ENCODE measurements at regions of chr14 and their contacts with region 1.

Region 1: DNA sequence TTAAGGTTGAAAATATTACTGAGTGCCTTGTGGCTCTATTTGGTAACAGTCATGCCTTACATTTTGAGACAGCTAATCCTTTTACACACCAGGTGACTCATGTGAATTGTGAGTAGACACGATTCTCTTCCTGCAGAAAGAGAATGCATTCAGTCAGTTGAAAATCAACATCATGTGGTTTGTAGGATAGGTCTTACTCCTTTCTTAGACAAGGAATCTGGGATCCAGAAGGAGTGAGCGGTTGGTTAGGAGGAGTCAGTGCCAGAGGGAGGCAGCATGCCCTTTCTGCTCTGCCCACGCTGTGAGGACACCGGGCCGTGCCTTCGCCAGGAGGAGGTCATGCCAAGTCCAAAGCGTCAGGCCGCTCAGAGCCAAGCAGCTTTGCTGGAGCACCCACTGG is 47.6 kb downstream of the TRAF3 start:
- DNase-seq: peak; percentile 86
- ATAC-seq: peak; percentile 13; the same call in 1 of the 2 replicates
- H3K4me3 ChIP-seq: no peak overlapping the region
- H3K27ac ChIP-seq: no peak overlapping the region
- H3K4me1 ChIP-seq: peaks cover 18% of the 10 kb centered on the region
- H3K27me3 ChIP-seq: no peaks in the 10 kb centered on the region
- CTCF ChIP-seq: no peak
- POLR2A ChIP-seq: no peak
- RAD21 ChIP-seq: no peak

Region 2: DNA sequence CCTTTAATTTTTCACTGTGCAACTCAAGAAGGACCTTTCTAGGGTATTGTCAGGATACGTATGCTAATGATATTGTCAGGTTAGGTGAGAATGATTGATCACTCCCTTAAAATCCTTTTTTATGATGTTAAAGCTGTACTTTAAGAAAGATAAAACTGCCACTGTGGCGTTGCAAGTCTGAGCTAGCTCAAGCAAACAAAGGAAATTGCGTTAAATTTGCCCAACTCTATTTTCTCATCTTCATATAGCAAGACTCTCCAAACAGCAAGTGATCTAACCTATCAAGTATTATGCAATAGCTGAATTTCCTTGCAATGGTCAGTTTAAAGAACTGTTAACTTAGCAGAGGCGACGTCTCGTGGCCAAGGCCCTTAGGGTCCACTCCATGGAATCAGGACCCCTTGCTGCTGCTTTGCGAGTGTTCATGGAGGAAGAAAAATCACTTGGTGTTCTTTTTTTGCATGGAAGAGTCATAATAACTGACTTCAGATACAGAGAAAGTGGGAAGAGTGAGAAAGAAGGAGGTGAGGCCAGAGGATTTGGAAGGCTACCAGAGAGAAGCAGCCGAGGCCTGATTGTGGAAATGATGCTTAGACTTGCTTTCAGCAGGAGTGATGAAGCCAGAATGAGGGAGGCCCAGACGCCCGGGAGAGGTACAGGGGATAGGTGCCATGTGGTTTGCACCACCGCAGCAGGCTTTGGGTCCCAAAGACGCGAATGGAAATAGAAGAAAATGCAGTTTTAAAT is 45.1 kb before region 1 on chr14:
- CTCF ChIA-PET with region 1: no interaction called
- POLR2A ChIA-PET with region 1: no interaction called
- dilution Hi-C with region 1: no loop called
- in situ Hi-C with region 1: no loop called
- intact Hi-C with region 1: loop called (anchors 5 kb)
- DNase-seq: peak; percentile 33
- ATAC-seq: no peak
- H3K4me3 ChIP-seq: no peak overlapping the region
- H3K27ac ChIP-seq: no peak overlapping the region
- H3K4me1 ChIP-seq: peaks cover 20% of the 10 kb centered on the region
- H3K27me3 ChIP-seq: no peaks in the 10 kb centered on the region
- CTCF ChIP-seq: no peak
- POLR2A ChIP-seq: no peak
- RAD21 ChIP-seq: no peak

Region 3: DNA sequence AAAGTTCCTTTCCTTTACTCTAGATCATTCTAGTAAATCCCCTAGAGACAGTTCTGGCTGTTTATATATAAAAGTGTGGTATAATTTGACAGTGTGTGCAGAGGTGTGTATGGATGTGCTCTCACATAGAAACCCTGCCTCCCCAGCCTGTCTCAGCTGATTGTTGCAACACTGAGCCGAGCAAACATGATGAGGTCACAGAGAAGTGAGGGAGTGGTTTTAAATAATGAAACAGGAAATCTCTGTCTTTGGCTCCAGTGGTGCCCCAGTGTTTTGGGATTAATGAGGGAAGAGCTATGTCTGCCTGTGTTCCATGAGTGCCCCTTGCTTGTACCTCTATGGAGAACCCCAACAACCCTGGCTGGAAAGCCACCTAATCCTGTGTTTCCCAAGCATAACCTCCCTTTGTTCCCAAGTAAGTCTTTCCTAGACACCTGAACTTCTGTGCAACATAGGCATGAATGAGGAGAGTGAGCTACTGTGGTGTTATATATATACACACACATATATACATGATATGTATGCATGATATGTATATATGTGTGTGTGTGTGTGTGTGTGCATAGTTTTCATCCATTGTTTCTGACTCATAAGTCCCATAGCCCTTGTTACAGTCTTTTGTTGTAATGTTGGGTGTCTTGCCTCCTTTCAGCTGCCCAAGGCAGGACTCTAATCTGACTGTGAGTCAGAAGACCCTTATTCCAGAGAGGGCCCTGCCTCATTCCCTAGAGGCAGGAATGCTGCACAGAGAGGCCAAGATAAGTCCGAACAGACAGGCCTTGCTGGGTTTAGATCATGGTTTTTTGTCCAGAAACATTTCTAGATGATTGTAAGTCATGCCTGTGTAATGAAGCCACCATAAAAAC is 29.5 kb before region 1 on chr14:
- CTCF ChIA-PET with region 1: no interaction called
- POLR2A ChIA-PET with region 1: no interaction called
- dilution Hi-C with region 1: no loop called
- in situ Hi-C with region 1: no loop called
- intact Hi-C with region 1: loop called (anchors 1 kb)
- DNase-seq: peak; percentile 91
- ATAC-seq: peak; percentile 85
- H3K4me3 ChIP-seq: no peak overlapping the region
- H3K27ac ChIP-seq: peak overlapping the region; percentile 72
- H3K4me1 ChIP-seq: peaks cover 16% of the 10 kb centered on the region
- H3K27me3 ChIP-seq: no peaks in the 10 kb centered on the region
- CTCF ChIP-seq: peak; percentile 62
- POLR2A ChIP-seq: no peak
- RAD21 ChIP-seq: peak; percentile 42

Region 4: GRCh38 chr14:102870994-102871831 is 46.4 kb after region 1 on chr14:
- CTCF ChIA-PET with region 1: no interaction called
- POLR2A ChIA-PET with region 1: no interaction called
- dilution Hi-C with region 1: no loop called
- in situ Hi-C with region 1: no loop called
- intact Hi-C with region 1: no loop called
- DNase-seq: no peak
- ATAC-seq: no peak
- H3K4me3 ChIP-seq: no peak overlapping the region
- H3K27ac ChIP-seq: no peak overlapping the region
- H3K4me1 ChIP-seq: no peaks in the 10 kb centered on the region
- H3K27me3 ChIP-seq: no peaks in the 10 kb centered on the region
- CTCF ChIP-seq: no peak
- POLR2A ChIP-seq: no peak
- RAD21 ChIP-seq: no peak

Measured in IMR-90 (cell line).